MCF 10A (cell line): ENCODE measurements at regions of chr1 and their contacts with region 1.

Region 1: DNA sequence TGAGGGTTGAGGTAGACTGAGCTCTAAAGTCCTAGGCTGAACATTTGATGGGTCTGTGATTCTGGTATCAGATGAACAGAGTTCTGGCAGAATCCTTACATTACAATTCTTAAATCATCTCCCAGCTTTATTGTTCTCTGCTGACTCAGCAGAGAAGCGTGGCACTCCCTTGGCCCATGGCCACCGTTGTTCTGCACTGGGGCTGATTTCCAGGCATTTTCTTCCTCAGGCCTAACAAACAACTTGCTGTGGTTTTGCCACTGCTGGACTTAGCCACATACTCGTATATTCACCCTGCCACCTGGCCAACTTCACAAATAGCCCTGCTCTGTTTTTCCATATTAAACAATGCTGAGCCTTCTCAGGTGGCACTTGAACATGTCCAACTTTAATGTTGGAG is 223.2 kb downstream of the TNR start:
- DNase-seq: peak; percentile 83
- H3K4me3 Mint-ChIP-seq: no peak overlapping the region
- H3K27ac Mint-ChIP-seq: no peak overlapping the region
- H3K4me1 Mint-ChIP-seq: peaks cover 27% of the 10 kb centered on the region
- H3K27me3 Mint-ChIP-seq: peaks cover 27% of the 10 kb centered on the region
- CTCF ChIP-seq: no peak

Region 2: GRCh38 chr1:175118375-175119367 is 401.5 kb before region 1 on chr1:
- CTCF ChIA-PET with region 1: no interaction called
- POLR2A ChIA-PET with region 1: no interaction called
- intact Hi-C with region 1: no loop called
- DNase-seq: no peak
- H3K4me3 Mint-ChIP-seq: no peak overlapping the region
- H3K27ac Mint-ChIP-seq: no peak overlapping the region
- H3K4me1 Mint-ChIP-seq: no peaks in the 10 kb centered on the region
- H3K27me3 Mint-ChIP-seq: no peaks in the 10 kb centered on the region
- CTCF ChIP-seq: no peak

Region 3: GRCh38 chr1:175267716-175268384 is 252.3 kb before region 1 on chr1:
- CTCF ChIA-PET with region 1: no interaction called
- POLR2A ChIA-PET with region 1: no interaction called
- intact Hi-C with region 1: no loop called
- DNase-seq: no peak
- H3K4me3 Mint-ChIP-seq: no peak overlapping the region
- H3K27ac Mint-ChIP-seq: no peak overlapping the region
- H3K4me1 Mint-ChIP-seq: peaks cover 2% of the 10 kb centered on the region
- H3K27me3 Mint-ChIP-seq: no peaks in the 10 kb centered on the region
- CTCF ChIP-seq: no peak

Region 4: GRCh38 chr1:175548774-175549173 is 28.6 kb after region 1 on chr1:
- CTCF ChIA-PET with region 1: no interaction called
- POLR2A ChIA-PET with region 1: interaction called, 4 read pairs
- intact Hi-C with region 1: loop called (anchors 2 kb)
- DNase-seq: peak; percentile 88
- H3K4me3 Mint-ChIP-seq: no peak overlapping the region
- H3K27ac Mint-ChIP-seq: peak overlapping the region; percentile 84
- H3K4me1 Mint-ChIP-seq: peaks cover 20% of the 10 kb centered on the region
- H3K27me3 Mint-ChIP-seq: no peaks in the 10 kb centered on the region
- CTCF ChIP-seq: no peak

Region 5: GRCh38 chr1:175830500-175830899 is 310.3 kb after region 1 on chr1:
- CTCF ChIA-PET with region 1: no interaction called
- POLR2A ChIA-PET with region 1: no interaction called
- intact Hi-C with region 1: no loop called
- DNase-seq: peak; percentile 34
- H3K4me3 Mint-ChIP-seq: no peak overlapping the region
- H3K27ac Mint-ChIP-seq: no peak overlapping the region
- H3K4me1 Mint-ChIP-seq: no peaks in the 10 kb centered on the region
- H3K27me3 Mint-ChIP-seq: no peaks in the 10 kb centered on the region
- CTCF ChIP-seq: no peak